Right cardiac atrium (tissue), 5 donors: ENCODE measurements at regions of chr10 and their contacts with region 1.

Region 1: GRCh38 chr10:11515596-11516430 is 95.6 kb downstream of the USP6NL start:
- DNase-seq: peak in 1 of 3 donors; percentile 55
- ATAC-seq: peak; percentile 85 to 86
- H3K4me3 ChIP-seq: no peak overlapping the region
- H3K27ac ChIP-seq: no peak overlapping the region
- H3K4me1 ChIP-seq: peaks cover under 1% of the 10 kb centered on the region
- H3K27me3 ChIP-seq: no peaks in the 10 kb centered on the region

Region 2: GRCh38 chr10:11472158-11472753 is 43.6 kb before region 1 on chr10:
- intact Hi-C with region 1: no loop called
- DNase-seq: peak; percentile 36 to 80 (median 72)
- ATAC-seq: peak; percentile 80 to 83
- H3K4me3 ChIP-seq: no peak overlapping the region
- H3K27ac ChIP-seq: no peak overlapping the region
- H3K4me1 ChIP-seq: no peaks in the 10 kb centered on the region
- H3K27me3 ChIP-seq: no peaks in the 10 kb centered on the region

Region 3: DNA sequence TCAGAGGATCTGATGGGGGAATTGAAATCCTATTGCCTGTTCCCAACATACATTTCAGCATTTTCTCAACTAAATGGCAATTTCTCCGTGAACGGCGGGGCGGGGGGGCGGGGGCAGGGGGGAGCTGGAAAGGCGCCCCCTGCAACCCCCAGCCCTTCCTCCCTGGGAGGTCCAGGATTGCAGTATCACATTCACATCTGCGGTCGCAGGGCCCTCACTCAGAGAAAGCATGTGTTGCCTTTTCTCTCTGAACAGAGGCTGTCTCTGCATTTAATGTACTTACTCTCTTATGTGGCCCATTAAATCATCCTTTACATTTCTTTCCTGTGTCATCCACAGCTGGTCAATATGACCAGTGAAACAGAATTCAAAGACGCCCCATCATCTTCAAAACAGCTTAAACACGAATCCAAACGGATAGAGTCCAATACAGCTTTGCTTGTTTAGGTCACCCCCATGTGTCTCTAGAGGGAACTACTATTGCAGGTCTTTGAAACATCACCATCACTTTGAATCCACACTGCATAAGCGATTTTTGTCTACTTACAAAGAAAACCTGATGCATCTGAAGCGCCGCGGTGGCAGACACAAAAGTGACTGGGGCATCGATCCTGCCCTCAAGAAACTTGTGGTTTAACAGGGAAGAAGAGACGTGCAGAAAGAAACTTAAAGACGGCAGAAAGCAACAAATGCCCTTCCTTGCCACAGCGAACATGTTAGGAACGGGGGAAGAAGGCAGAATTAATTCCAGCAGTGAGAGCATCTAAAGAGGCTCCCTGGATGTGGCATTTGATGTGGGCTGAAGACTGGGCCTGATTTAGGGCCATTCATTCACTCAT is 209.3 kb after region 1 on chr10:
- intact Hi-C with region 1: loop called (anchors 5 kb)
- DNase-seq: no peak
- ATAC-seq: peak; percentile 83
- H3K4me3 ChIP-seq: no peak overlapping the region
- H3K27ac ChIP-seq: no peak overlapping the region
- H3K4me1 ChIP-seq: no peaks in the 10 kb centered on the region
- H3K27me3 ChIP-seq: no peaks in the 10 kb centered on the region

Region 4: DNA sequence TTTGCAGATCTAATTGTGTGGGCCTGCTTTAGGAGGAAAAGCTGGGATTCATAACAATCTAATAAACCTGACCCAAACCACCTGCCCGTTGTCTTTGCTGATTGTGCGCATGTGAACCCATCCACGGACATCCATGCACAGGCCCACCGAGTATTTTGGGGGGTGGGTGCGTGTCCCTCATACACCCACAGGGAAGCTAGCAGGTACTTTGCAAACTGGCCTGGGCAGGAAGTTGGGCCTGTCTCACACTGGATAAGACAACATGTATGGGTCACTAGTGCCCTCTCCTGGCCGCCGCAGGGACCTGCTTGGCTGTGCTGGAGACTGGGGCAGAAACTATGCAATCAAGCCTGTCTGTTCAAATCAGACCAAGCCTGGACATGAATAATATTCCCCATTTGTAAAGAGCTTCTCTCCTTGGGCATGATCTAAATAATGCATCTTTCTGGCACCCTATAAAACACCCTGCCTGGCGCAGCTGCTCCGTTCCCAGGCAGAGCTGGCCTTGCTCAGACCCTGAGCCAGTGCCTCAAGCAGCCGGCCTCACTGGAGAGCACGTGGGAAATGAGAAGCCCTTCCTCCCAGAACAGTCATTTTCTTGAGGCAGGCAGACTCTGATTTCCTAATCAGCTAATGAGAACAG is 242.1 kb after region 1 on chr10:
- intact Hi-C with region 1: loop called (anchors 10 kb)
- DNase-seq: peak; percentile 84 to 93 (median 93)
- ATAC-seq: peak; percentile 82 to 88
- H3K4me3 ChIP-seq: no peak overlapping the region
- H3K27ac ChIP-seq: peak overlapping the region; percentile 91
- H3K4me1 ChIP-seq: peaks cover 16% of the 10 kb centered on the region
- H3K27me3 ChIP-seq: no peaks in the 10 kb centered on the region